Mammary epithelial cell (primary cell): ENCODE measurements at regions of chr6 and their contacts with region 1.

Region 1: GRCh38 chr6:99232056-99232455 is 117.4 kb downstream of the FAXC start:
- DNase-seq: peak; percentile 8
- H3K4me3 ChIP-seq: no peak overlapping the region
- H3K27ac ChIP-seq: no peak overlapping the region
- H3K4me1 ChIP-seq: no peaks in the 10 kb centered on the region
- H3K27me3 ChIP-seq: peaks cover 8% of the 10 kb centered on the region
- CTCF ChIP-seq: no peak

Region 2: DNA sequence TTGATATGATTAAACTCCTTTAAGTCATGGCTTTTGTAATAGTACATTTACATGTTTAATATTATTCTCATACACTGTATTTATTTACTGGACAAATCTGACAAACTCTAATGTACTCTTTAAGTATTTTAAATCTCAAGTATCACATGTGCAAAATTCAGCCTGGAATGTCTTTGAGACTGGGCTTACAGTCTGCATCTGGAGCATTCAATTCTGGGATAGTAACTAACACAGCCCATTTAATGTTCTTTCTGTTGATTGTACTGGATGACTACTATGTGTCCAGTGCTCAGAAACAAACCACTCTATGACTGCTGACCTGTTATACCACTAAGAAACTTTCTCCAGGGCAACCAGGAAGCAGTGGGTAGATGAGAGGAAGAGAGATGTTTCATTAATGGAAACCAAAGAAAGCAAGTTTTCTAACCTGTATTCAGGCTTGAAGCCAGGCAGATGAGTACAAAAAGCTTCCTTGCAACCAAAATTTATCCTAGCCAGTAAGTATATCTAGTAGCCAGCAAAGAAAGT is 311.1 kb before region 1 on chr6:
- CTCF ChIA-PET with region 1: no interaction called
- dilution Hi-C with region 1: no loop called
- in situ Hi-C with region 1: no loop called
- intact Hi-C with region 1: no loop called
- DNase-seq: no peak
- H3K4me3 ChIP-seq: no peak overlapping the region
- H3K27ac ChIP-seq: no peak overlapping the region
- H3K4me1 ChIP-seq: no peaks in the 10 kb centered on the region
- H3K27me3 ChIP-seq: no peaks in the 10 kb centered on the region
- CTCF ChIP-seq: no peak

Region 3: GRCh38 chr6:99151634-99152344 is 80.3 kb before region 1 on chr6:
- CTCF ChIA-PET with region 1: no interaction called
- dilution Hi-C with region 1: loop called (anchors 5 kb)
- in situ Hi-C with region 1: no loop called
- intact Hi-C with region 1: no loop called
- DNase-seq: peak; percentile 38
- H3K4me3 ChIP-seq: no peak overlapping the region
- H3K27ac ChIP-seq: no peak overlapping the region
- H3K4me1 ChIP-seq: no peaks in the 10 kb centered on the region
- H3K27me3 ChIP-seq: peaks cover 3% of the 10 kb centered on the region
- CTCF ChIP-seq: peak; percentile 74 to 81